HCT116 (cell line): ENCODE measurements at regions of chr17 and their contacts with region 1.

Region 1: DNA sequence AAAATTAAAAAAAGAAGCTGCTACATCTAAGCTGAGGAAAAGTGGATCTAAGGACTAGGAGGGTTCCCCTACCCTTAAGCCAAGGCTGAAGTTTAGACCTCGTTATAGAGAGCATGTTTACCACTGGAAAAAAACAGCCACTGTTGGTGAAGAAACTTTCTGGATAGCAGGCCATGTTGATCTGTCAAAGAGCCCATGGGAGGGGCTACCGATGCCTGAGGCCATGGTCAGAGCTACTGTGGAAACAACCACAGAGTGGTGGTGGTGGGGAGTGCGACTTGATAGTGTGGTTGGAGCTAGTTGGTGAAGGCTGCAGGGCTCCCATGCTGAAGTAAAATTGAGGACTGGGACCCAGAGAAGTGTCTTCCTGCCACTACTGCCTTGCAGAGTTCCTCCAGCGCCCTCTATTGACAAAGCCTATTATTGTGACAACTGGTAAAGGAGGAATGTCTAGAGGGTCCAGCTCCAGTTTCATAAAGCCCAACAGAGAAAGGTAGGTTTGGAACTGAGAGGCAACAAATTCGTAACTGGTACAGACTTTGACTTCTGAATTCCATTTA is 12.7 kb upstream of the FAM20A start:
- DNase-seq: peak; percentile 62
- ATAC-seq: peak; percentile 96
- H3K4me3 ChIP-seq: no peak overlapping the region
- H3K27ac ChIP-seq: no peak overlapping the region
- H3K4me1 ChIP-seq: no peaks in the 10 kb centered on the region
- H3K27me3 ChIP-seq: no peaks in the 10 kb centered on the region
- CTCF ChIP-seq: peak; percentile 48 to 89 (median 88); a peak in 5 of 6 replicates
- POLR2A ChIP-seq: no peak
- RAD21 ChIP-seq: peak; percentile 71

Region 2: GRCh38 chr17:68334401-68334800 is 279.4 kb before region 1 on chr17:
- CTCF ChIA-PET with region 1: no interaction called
- POLR2A ChIA-PET with region 1: no interaction called
- RAD21 ChIA-PET with region 1: no interaction called
- intact Hi-C with region 1: no loop called
- DNase-seq: no peak
- ATAC-seq: no peak
- H3K4me3 ChIP-seq: no peak overlapping the region
- H3K27ac ChIP-seq: no peak overlapping the region
- H3K4me1 ChIP-seq: peaks cover 0 to 5% of the 10 kb centered on the region in 2 experiments; a peak in 2 of 4 replicates
- H3K27me3 ChIP-seq: no peaks in the 10 kb centered on the region
- CTCF ChIP-seq: no peak
- POLR2A ChIP-seq: no peak
- RAD21 ChIP-seq: no peak

Region 3: GRCh38 chr17:68468334-68468733 is 145.5 kb before region 1 on chr17:
- CTCF ChIA-PET with region 1: no interaction called
- POLR2A ChIA-PET with region 1: no interaction called
- RAD21 ChIA-PET with region 1: no interaction called
- intact Hi-C with region 1: loop called (anchors 5 kb)
- DNase-seq: no peak
- ATAC-seq: no peak
- H3K4me3 ChIP-seq: no peak overlapping the region
- H3K27ac ChIP-seq: no peak overlapping the region
- H3K4me1 ChIP-seq: peaks cover 3 to 8% of the 10 kb centered on the region in 2 experiments; a peak in 3 of 4 replicates
- H3K27me3 ChIP-seq: no peaks in the 10 kb centered on the region
- CTCF ChIP-seq: no peak
- POLR2A ChIP-seq: no peak
- RAD21 ChIP-seq: no peak

Region 4: DNA sequence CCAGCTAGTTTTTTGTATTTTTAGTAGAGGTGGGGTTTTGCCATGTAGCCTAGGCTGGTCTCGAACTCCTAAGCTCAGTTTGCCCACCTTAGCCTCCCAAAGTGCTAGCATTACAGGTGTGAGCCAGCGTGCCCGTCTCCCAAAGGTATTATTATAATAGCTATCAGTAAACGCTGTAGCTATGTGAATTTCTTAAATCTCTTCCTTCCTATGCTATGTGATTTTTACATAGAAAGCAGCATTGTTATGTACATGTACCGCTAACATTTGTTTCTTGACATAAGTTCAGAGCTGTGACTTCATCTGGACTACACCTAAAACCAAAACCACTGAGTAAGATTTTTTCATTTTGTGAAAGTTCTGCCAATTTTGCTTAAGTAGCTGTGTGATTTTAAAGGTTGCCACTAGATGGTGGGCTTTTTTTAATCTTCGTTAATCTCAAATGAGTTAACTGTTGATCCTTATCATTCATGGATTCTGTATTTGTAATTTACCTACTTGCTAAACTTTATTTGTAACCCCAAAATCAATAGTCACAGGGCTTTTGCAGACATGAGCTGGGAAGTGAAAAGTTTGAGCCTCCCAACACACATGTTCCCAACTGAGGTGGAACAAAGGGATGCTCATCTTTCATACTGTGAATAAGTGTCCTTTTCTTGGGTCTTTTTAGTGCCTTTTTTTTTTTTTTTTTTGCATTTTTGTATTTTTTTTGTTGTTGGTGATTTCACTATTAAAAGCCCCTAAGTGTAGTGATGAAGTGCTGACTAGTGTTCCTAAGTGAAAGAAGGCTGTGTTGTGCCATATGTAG is 79.7 kb before region 1 on chr17:
- CTCF ChIA-PET with region 1: interaction called, 23 read pairs
- POLR2A ChIA-PET with region 1: no interaction called
- RAD21 ChIA-PET with region 1: no interaction called
- intact Hi-C with region 1: loop called (anchors 2 kb)
- DNase-seq: no peak
- ATAC-seq: no peak
- H3K4me3 ChIP-seq: no peak overlapping the region
- H3K27ac ChIP-seq: no peak overlapping the region
- H3K4me1 ChIP-seq: no peaks in the 10 kb centered on the region
- H3K27me3 ChIP-seq: no peaks in the 10 kb centered on the region
- CTCF ChIP-seq: peak; percentile 17 to 66 (median 42); a peak in 4 of 6 replicates
- POLR2A ChIP-seq: no peak
- RAD21 ChIP-seq: peak; percentile 37; the same call in 1 of the 2 replicates